Dorsolateral prefrontal cortex (tissue), 120 donors: ENCODE measurements at regions of chr12 and their contacts with region 1.

Region 1: DNA sequence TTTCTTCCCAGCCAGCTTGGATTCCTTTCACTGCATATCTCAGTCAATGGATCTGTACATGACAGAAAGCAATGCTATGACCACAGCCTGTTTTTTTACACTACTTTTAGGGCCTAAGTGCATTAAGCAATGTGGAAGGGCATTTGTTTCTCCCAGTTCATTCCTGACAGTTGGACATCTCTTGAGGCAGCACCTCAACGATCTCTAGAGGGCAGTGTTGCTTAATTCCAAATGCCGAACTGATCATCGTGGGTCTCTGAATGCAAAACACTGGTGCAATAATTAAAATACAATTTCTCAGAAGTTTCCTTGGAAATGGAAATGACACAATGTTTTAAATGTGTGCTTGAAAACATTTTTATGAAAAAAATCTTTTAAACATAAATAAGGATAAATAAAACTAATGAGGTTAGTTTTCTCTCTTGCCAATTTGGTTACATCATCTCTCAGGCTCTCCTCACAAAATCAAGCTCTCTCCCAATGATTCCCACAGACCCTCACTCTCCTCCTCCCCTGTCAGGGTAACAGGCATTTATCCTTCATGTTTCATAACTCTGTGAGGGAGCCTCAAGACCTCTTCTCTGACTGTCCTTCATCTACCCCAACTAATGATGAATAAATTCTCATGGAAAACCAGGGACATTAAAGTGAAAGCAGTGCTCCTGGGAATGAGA is 192.4 kb upstream of the SLC16A7 start:
- DNase-seq: peak in 7 of 10 donors; percentile 21 to 67 (median 44)
- H3K4me3 ChIP-seq: peak overlapping the region in 51 of 59 donors; percentile 0 to 62 (median 36)
- H3K27ac ChIP-seq: peak overlapping the region in 7 of 59 donors; percentile 2 to 51 (median 32)
- H3K27me3 ChIP-seq: no peaks in the 10 kb centered on the region
- CTCF ChIP-seq: peak; percentile 44 to 87 (median 76)

Region 2: DNA sequence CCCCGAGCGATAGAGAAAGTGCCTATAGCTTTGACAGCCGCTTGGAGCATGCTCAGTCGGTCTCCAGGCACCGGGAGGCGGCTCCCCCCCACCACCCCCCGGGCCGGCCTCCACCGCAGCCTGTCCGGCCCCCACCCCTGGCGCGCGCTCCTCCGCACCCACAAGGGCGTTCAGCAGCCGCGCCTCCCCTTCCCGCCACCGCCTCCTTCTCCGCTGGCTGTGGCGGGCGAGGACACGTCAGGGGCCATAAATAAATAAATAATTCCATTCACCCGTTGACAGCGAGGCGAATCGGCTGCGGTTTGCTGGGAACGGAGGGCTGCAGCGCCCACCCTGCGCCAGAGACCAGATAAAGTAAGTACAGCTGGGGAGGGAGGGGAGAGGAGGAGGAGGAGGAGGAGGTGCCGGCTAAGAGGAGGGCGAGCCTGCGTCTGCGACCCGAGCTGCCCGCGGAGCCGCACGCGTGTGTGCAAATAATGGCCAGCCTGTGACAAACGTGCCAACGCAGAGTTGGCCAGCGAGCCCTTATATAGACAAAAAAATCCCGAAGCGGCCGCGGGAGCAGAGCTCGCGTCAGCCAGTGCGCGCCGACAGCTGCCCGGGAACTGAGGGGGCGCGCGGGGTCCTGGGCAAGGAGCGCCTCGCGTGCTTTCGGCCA is 192.6 kb after region 1 on chr12 and contains the start of gene SLC16A7:
- intact Hi-C with region 1: loop called in 1 of 2 experiments (anchors 10 kb)
- DNase-seq: peak; percentile 70 to 92 (median 86)
- H3K4me3 ChIP-seq: peak within 1 kb of the TSS; percentile 50 to 89 (median 75)
- H3K27ac ChIP-seq: peak within 1 kb of the TSS; percentile 72 to 98 (median 94)
- H3K27me3 ChIP-seq: no peaks in the 10 kb centered on the region
- CTCF ChIP-seq: peak in 12 of 56 donors; percentile 4 to 43 (median 15)
- total RNA-seq, gene SLC16A7: 14.8 to 55.5 (median 34.3) TPM

Region 3: DNA sequence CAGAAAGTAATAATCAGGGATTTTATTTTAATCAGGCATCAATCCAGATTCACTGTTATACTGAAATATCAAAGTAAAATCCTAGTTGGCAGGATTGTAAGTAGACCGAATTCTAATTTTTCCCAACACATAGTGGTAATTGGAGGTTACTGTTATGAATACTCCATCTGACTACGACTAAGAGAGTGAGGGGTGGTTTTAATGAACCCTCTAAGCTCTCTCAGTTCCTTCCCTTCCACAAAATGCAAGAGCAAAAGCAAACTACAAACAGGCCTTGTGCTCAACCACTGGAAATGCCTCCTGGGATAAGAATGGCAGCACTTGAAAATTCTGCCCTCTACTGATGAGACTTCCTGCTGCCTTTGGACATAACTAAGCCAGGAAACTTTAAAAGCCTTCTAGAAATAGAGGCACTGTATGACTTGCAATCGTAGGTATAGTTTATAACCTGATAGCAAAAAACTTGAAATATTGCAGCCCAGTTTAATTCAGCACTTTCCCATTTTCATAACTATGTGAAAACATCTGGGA is 377.3 kb after region 1 on chr12:
- intact Hi-C with region 1: loop called in 1 of 2 experiments (anchors 5 kb)
- DNase-seq: no peak
- H3K4me3 ChIP-seq: no peak overlapping the region
- H3K27ac ChIP-seq: peak overlapping the region in 4 of 59 donors; percentile 7 to 38 (median 17)
- H3K27me3 ChIP-seq: no peaks in the 10 kb centered on the region
- CTCF ChIP-seq: peak in 53 of 56 donors; percentile 15 to 71 (median 50)